Activated CD4-positive, alpha-beta T cell treated with anti-CD3 and anti-CD28 coated beads, Interleukin-2, amount 10 ng/mL, durations not matched to agents 24 days and 14 days (primary cell): ENCODE measurements at regions of chr13 and their contacts with region 1.

Region 1: DNA sequence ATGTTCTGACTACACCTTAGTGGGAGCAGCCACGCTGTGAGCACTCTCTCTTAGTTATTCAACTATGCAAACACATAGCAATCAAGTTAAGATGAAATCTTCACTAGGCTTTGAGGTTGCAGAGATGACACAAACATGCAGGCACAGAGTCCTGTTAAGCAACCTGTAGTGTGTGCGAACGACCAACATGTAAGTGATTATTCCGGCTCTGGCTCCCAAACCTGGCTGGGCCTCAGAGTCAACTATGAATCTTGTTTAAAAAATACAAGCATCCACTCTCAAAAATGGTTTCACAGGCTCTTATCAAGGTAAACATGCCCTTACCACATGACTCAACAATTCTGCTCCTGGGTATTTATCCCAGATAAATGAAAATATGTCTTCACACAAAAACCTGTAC is 91.4 kb downstream of the IRS2 start:
- DNase-seq: no peak
- H3K4me3 Mint-ChIP-seq: no peak overlapping the region
- H3K27ac Mint-ChIP-seq: no peak overlapping the region
- H3K4me1 Mint-ChIP-seq: no peaks in the 10 kb centered on the region
- H3K27me3 Mint-ChIP-seq: peaks cover 9% of the 10 kb centered on the region

Region 2: GRCh38 chr13:109654341-109655205 is 40.4 kb before region 1 on chr13:
- intact Hi-C with region 1: no loop called
- DNase-seq: no peak
- H3K4me3 Mint-ChIP-seq: no peak overlapping the region
- H3K27ac Mint-ChIP-seq: no peak overlapping the region
- H3K4me1 Mint-ChIP-seq: no peaks in the 10 kb centered on the region
- H3K27me3 Mint-ChIP-seq: peaks cover 2% of the 10 kb centered on the region

Region 3: DNA sequence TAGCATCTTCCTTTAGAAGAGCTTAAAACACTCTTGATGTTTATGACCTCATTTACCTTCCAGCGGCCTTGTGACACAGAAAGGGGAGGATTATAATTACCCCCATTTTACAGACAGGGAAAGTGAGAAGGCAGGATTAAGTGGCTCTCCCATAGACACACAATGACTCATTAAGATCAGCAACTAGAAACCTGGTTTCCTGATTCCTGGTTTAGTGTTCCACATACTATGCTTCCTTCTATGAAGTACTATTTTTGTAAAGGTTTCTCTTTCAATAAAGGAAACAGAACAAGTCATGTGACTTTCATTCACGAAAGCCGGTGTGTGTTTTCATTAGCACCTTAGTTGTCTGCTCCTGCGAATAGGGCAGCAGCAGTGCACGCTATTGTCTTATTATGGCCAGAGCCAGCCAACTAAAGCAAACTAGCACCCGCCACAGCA is 83.2 kb after region 1 on chr13:
- intact Hi-C with region 1: loop called (anchors 5 kb)
- DNase-seq: peak; percentile 62
- H3K4me3 Mint-ChIP-seq: no peak overlapping the region
- H3K27ac Mint-ChIP-seq: no peak overlapping the region
- H3K4me1 Mint-ChIP-seq: peaks cover 40% of the 10 kb centered on the region
- H3K27me3 Mint-ChIP-seq: no peaks in the 10 kb centered on the region